ENCODE measurements at regions of chr11 and their contacts with region 1.

Region 1: DNA sequence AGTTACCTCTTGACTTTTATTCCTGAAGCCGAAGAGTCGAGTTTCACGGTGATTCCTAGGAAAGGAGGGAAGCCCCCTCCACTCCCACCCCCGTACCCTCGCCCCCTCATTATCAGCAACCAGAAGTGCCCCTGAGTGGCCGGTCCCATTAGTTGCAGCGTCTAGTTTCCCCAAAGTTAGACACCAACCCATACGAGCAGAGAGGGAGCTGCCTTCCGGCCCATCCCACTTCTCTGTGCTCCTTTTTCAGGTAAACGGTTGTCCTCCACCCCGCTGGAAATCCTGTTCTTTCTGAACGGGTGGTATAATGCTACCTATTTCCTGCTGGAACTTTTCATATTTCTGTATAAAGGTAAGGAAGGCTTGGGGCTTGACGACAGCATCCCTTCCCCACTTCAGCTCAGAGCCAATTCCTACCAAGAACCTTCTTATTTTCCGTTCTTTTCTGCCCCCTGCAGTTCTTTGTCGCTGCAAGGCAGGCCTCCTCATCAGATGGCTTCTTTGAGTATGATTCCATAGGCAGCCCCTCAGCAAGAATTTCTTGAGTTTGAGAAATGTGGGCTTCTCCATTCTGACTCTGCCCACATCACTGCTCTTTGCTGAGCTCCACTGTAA is 701 bp downstream of the TMEM216 start:
- DNase-seq: peak; percentile 45
- CTCF ChIP-seq: peak; percentile 38

Region 2: GRCh38 chr11:61406067-61406466 is 13.0 kb after region 1 on chr11:
- CTCF ChIA-PET with region 1: interaction called, 23 read pairs
- POLR2A ChIA-PET with region 1: interaction called, 3 read pairs
- DNase-seq: no peak
- CTCF ChIP-seq: no peak

Measured in GM10248 (cell line).